Activated CD8-positive, alpha-beta T cell treated with anti-CD3 and anti-CD28 coated beads for 36 hours (primary cell): ENCODE measurements at regions of chr2 and their contacts with region 1.

Region 1: GRCh38 chr2:69724540-69725159 is 17.3 kb upstream of the ANXA4 start:
- DNase-seq: peak; percentile 92
- ATAC-seq: peak; percentile 91
- H3K4me3 Mint-ChIP-seq: peak overlapping the region; percentile 64
- H3K27ac Mint-ChIP-seq: no peak overlapping the region
- H3K4me1 Mint-ChIP-seq: peaks cover 6% of the 10 kb centered on the region
- H3K27me3 Mint-ChIP-seq: no peaks in the 10 kb centered on the region
- CTCF ChIP-seq: peak; percentile 97

Region 2: DNA sequence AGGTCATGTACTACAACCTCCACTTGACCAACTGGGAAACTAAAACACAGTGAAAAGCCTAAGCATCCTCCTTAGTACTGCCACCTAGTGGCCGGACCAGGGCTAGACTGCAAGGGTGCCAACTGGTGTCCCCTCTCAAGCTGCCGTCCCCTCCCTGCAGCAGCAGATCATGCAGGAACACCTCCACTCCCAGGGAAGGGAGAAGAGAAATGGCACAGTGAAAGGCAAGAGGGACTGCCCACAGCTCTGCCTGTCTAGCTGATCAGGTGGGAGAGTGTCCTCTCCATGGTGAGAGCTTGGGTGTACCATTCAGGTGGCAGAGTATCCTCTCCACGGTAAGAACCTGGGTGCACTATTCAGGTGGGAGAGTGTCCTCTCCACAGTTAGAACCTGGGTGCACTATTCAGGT is 159.2 kb before region 1 on chr2:
- CTCF ChIA-PET with region 1: interaction called, 76 read pairs
- POLR2A ChIA-PET with region 1: no interaction called
- intact Hi-C with region 1: no loop called
- DNase-seq: peak; percentile 84
- ATAC-seq: peak; percentile 71
- H3K4me3 Mint-ChIP-seq: no peak overlapping the region
- H3K27ac Mint-ChIP-seq: peak overlapping the region; percentile 59
- H3K4me1 Mint-ChIP-seq: peaks cover 85% of the 10 kb centered on the region
- H3K27me3 Mint-ChIP-seq: no peaks in the 10 kb centered on the region
- CTCF ChIP-seq: peak; percentile 85

Region 3: GRCh38 chr2:69741619-69742466 is 17.2 kb after region 1 on chr2 and contains the start of gene ANXA4:
- CTCF ChIA-PET with region 1: interaction called, 66 read pairs
- POLR2A ChIA-PET with region 1: interaction called, 3 read pairs
- intact Hi-C with region 1: no loop called
- DNase-seq: peak; percentile 65
- ATAC-seq: peak; percentile 84
- H3K4me3 Mint-ChIP-seq: peak within 1 kb of the TSS; percentile 83
- H3K27ac Mint-ChIP-seq: peak within 1 kb of the TSS; percentile 84
- H3K4me1 Mint-ChIP-seq: peaks cover 11% of the 10 kb centered on the region
- H3K27me3 Mint-ChIP-seq: peaks cover 3% of the 10 kb centered on the region
- CTCF ChIP-seq: no peak
- total RNA-seq, gene ANXA4: 14.6 to 17.5 TPM

Region 4: GRCh38 chr2:69781321-69782248 is 56.9 kb after region 1 on chr2:
- CTCF ChIA-PET with region 1: interaction called, 22 read pairs
- POLR2A ChIA-PET with region 1: no interaction called
- intact Hi-C with region 1: no loop called
- DNase-seq: no peak
- ATAC-seq: no peak
- H3K4me3 Mint-ChIP-seq: no peak overlapping the region
- H3K27ac Mint-ChIP-seq: no peak overlapping the region
- H3K4me1 Mint-ChIP-seq: peaks cover 4% of the 10 kb centered on the region
- H3K27me3 Mint-ChIP-seq: no peaks in the 10 kb centered on the region
- CTCF ChIP-seq: no peak

Region 5: GRCh38 chr2:69811018-69811417 is 86.4 kb after region 1 on chr2:
- CTCF ChIA-PET with region 1: interaction called, 382 read pairs
- POLR2A ChIA-PET with region 1: interaction called, 12 read pairs
- intact Hi-C with region 1: no loop called
- DNase-seq: no peak
- ATAC-seq: no peak
- H3K4me3 Mint-ChIP-seq: no peak overlapping the region
- H3K27ac Mint-ChIP-seq: no peak overlapping the region
- H3K4me1 Mint-ChIP-seq: no peaks in the 10 kb centered on the region
- H3K27me3 Mint-ChIP-seq: no peaks in the 10 kb centered on the region
- CTCF ChIP-seq: no peak

Region 6: DNA sequence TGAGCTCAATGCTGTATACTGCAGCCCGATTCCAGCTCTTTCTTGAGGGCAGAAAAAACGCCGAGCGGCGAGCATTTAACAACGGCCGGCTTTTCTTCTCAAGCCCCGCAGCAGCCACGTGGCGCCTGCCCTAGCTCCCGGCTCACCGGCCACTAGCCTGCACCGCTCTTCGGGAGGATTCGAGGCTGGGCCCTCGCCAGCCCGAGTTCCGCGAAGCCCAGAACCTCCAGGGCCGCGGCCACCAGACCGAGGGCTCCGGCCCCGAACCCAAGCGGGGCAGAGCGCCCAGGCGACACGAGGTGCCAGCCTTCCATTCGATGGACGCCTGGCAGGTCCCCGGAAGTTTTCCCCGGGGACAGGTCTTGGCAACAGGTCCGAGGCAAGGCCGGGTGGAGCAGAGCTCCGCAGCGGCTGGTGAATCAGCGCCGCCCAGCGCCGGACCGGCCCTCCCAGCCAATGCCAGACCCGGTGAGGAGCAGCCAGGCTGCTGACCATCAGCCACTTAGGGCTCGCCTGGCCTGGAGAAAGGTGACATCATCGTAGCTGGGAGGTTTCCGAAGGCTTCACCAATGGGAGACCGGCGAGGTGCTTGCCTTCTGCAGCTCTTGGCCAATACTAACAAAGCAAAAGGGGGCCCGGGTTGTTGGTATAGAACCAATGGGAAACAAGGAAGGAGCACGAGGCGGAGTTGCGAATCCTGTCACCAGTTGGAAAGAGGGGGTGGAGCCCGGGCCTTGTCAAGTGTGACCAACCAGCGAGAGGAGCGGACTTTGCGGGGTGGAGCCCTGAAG is 189.7 kb after region 1 on chr2:
- CTCF ChIA-PET with region 1: interaction called, 18 read pairs
- POLR2A ChIA-PET with region 1: interaction called, 3 read pairs
- intact Hi-C with region 1: no loop called
- DNase-seq: peak; percentile 100
- ATAC-seq: peak; percentile 96
- H3K4me3 Mint-ChIP-seq: peak overlapping the region; percentile 86
- H3K27ac Mint-ChIP-seq: peak overlapping the region; percentile 92
- H3K4me1 Mint-ChIP-seq: peaks cover 37% of the 10 kb centered on the region
- H3K27me3 Mint-ChIP-seq: no peaks in the 10 kb centered on the region
- CTCF ChIP-seq: no peak